ENCODE measurements at regions of chrX and their contacts with region 1.

Region 1: DNA sequence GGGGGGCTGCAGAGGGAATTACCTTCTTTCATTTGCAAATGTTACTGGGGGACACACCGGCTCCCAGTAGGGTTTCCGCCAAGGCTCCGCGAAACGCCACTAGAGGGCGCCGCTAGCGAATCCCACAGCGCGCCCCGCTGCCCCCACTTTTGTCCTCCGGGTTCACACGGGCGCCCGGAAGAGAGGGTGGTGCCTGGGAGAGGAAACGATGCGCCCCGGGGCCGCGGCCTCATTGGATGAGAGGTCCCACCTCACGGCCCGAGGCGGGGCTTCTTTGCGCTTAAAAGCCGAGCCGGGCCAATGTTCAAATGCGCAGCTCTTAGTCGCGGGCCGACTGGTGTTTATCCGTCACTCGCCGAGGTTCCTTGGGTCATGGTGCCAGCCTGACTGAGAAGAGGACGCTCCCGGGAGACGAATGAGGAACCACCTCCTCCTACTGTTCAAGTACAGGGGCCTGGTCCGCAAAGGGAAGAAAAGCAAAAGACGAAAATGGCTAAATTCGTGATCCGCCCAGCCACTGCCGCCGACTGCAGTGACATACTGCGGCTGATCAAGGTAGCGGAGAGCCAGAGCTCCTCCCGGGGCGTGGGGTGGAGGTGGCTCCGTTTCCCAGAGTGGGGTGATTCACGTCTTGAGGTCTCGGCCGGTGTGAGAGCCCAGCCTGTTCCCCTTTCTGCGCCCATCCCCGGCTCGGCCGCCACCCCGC is at the start of gene SAT1:
- DNase-seq: peak; percentile 84 to 94 (median 91)
- ATAC-seq: peak; percentile 89
- H3K4me3 ChIP-seq: peak within 1 kb of the TSS; percentile 91
- H3K4me3 Mint-ChIP-seq: peak within 1 kb of the TSS; percentile 84 to 98 (median 95)
- H3K27ac ChIP-seq: peak within 1 kb of the TSS; percentile 88
- H3K27ac Mint-ChIP-seq: peak within 1 kb of the TSS; percentile 96 to 99 (median 97)
- H3K4me1 ChIP-seq: peaks cover 13 to 17% of the 10 kb centered on the region in 2 donors
- H3K4me1 Mint-ChIP-seq: peaks cover 14 to 41% (median 35%) of the 10 kb centered on the region in 7 donors
- H3K27me3 ChIP-seq: no peaks in the 10 kb centered on the region
- H3K27me3 Mint-ChIP-seq: no peaks in the 10 kb centered on the region
- total RNA-seq, gene SAT1: 68.4 to 1,059 (median 127) TPM

Region 2: DNA sequence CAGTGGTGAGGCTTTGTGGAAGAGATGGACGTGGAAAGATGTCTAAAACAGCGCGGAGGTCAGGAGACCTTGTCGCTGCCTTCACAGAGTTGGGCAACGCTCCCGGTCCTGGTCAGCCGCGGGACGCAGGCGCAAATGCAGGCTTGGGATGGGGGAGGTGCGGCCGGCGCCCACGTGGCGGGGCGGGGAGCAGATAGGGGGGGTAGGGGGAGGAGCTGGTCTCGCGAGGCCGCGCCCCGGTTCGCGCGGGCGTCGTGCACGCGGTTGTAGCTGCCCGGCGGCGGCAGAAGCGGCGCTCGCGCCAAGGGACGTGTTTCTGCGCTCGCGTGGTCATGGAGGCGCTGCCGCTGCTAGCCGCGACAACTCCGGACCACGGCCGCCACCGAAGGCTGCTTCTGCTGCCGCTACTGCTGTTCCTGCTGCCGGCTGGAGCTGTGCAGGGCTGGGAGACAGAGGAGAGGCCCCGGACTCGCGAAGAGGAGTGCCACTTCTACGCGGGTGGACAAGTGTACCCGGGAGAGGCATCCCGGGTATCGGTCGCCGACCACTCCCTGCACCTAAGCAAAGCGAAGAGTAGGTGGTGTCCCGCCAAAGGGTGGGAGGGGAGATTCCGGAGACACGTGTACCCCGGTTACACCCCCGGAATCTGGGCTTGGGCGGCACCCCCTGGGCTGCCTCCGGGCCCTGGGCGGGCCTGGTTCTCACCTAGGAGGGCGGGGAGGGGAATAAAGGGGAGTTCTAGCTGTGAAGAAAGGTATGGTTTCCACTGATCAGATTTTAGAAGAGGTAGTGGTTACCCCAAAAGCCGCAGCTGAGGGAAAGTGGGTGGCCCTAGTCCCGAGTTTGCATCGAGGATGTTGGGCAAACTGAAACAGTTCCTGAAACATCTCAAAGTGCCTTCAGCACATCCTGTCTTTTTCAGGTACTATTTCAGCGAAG is 115.5 kb before region 1 on chrX and contains the start of gene PRDX4:
- CTCF ChIA-PET with region 1: no interaction called
- POLR2A ChIA-PET with region 1: interaction called, 4 read pairs
- intact Hi-C with region 1: loop called (anchors 1 to 2 kb)
- DNase-seq: peak; percentile 42 to 79 (median 57)
- ATAC-seq: peak; percentile 96
- H3K4me3 ChIP-seq: peak within 1 kb of the TSS; percentile 73
- H3K4me3 Mint-ChIP-seq: peak within 1 kb of the TSS; percentile 80 to 94 (median 92)
- H3K27ac ChIP-seq: peak within 1 kb of the TSS; percentile 85
- H3K27ac Mint-ChIP-seq: peak within 1 kb of the TSS; percentile 71 to 97 (median 89)
- H3K4me1 ChIP-seq: peaks cover 10 to 12% of the 10 kb centered on the region in 2 donors
- H3K4me1 Mint-ChIP-seq: peaks cover 6 to 29% (median 23%) of the 10 kb centered on the region in 7 donors
- H3K27me3 ChIP-seq: no peaks in the 10 kb centered on the region
- H3K27me3 Mint-ChIP-seq: no peaks in the 10 kb centered on the region
- total RNA-seq, gene PRDX4: 8.0 to 33.3 (median 12.1) TPM

Region 3: DNA sequence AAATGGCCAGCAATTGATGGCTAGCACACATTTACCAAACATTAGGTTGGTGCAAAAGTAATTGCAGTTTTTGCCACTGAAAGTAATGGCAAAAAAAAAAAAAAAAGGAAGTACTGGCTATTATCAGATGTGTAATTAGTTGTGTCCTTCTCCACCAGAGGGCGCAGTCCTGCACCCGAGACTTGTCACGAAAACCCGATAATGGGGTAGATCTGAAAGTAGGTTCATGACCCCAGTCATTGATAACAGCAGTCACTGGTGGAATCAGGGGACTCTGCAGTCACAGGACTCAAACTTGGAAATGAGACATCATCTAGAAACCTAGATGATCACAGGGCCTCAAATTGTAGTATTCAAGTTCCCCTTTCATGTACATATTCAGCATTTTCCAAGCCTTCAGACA is 26.9 kb before region 1 on chrX:
- CTCF ChIA-PET with region 1: interaction called, 3 read pairs
- POLR2A ChIA-PET with region 1: interaction called, 3 read pairs
- intact Hi-C with region 1: loop called (anchors 1 kb)
- DNase-seq: peak in 8 of 9 donors; percentile 23 to 63 (median 47)
- ATAC-seq: peak; percentile 84
- H3K4me3 ChIP-seq: no peak overlapping the region
- H3K4me3 Mint-ChIP-seq: peak overlapping the region in 2 of 10 donors; percentile 33 to 54
- H3K27ac ChIP-seq: no peak overlapping the region
- H3K27ac Mint-ChIP-seq: no peak overlapping the region
- H3K4me1 ChIP-seq: no peaks in the 10 kb centered on the region
- H3K4me1 Mint-ChIP-seq: peaks cover 0 to 6% (median 0%) of the 10 kb centered on the region in 7 donors
- H3K27me3 ChIP-seq: no peaks in the 10 kb centered on the region
- H3K27me3 Mint-ChIP-seq: no peaks in the 10 kb centered on the region

Region 4: GRCh38 chrX:23817172-23817601 is 34.2 kb after region 1 on chrX:
- CTCF ChIA-PET with region 1: no interaction called
- POLR2A ChIA-PET with region 1: no interaction called
- intact Hi-C with region 1: no loop called
- DNase-seq: no peak
- ATAC-seq: peak; percentile 55
- H3K4me3 ChIP-seq: no peak overlapping the region
- H3K4me3 Mint-ChIP-seq: no peak overlapping the region
- H3K27ac ChIP-seq: no peak overlapping the region
- H3K27ac Mint-ChIP-seq: no peak overlapping the region
- H3K4me1 ChIP-seq: no peaks in the 10 kb centered on the region
- H3K4me1 Mint-ChIP-seq: peaks cover 0 to 4% (median 0%) of the 10 kb centered on the region in 7 donors
- H3K27me3 ChIP-seq: no peaks in the 10 kb centered on the region
- H3K27me3 Mint-ChIP-seq: no peaks in the 10 kb centered on the region

Region 5: DNA sequence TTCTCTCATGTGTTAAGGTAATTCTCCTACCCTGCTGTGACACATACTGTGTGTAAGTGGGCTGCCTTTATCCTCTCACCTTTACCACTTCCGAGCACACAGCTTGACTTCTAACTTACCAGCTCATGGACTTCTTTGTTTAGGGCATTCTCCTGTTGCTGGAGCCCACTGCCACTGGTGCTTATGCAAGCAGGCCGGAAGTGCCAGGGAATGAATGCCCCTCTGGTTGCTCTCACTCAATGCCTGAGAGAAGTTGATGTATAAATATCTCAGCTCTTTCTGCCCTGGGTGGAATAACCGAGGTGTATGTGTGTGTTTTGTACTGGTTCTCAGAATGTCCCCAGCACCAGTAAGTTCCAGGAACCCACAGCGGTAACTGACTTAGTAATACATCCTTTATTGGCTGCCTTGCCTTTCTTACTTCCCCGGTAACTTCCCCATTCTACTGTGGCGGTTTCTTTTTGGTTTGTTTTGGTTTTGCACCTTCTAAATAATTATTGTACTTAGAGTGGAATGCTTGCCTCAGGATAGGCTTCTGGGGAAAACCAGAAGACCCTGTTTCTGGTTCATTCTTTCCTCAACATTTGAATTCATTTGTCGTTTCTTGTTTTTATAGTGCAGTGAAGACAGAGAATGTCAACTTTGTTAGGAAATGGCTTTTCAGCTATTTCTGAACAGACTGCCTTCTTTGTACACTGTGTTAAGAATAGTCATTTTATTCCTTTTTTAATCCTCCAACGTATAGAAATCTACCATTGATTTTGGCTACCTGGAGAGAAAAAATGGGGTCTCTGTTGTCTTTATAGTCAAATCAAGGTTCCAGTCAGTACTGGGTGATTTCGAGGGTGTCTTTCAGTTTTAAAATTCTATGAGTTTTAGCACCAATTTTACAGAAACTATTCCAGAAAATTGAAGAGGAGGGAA is 170.2 kb after region 1 on chrX:
- CTCF ChIA-PET with region 1: interaction called, 6 read pairs
- POLR2A ChIA-PET with region 1: interaction called, 3 read pairs
- intact Hi-C with region 1: loop called (anchors 2 kb)
- DNase-seq: peak in 8 of 9 donors; percentile 31 to 63 (median 46)
- ATAC-seq: peak; percentile 93
- H3K4me3 ChIP-seq: peak overlapping the region; percentile 84
- H3K4me3 Mint-ChIP-seq: peak overlapping the region; percentile 72 to 97 (median 88)
- H3K27ac ChIP-seq: peak overlapping the region; percentile 80
- H3K27ac Mint-ChIP-seq: peak overlapping the region; percentile 78 to 99 (median 91)
- H3K4me1 ChIP-seq: peaks cover 0 to 12% of the 10 kb centered on the region in 2 donors
- H3K4me1 Mint-ChIP-seq: peaks cover 7 to 55% (median 20%) of the 10 kb centered on the region in 7 donors
- H3K27me3 ChIP-seq: no peaks in the 10 kb centered on the region
- H3K27me3 Mint-ChIP-seq: no peaks in the 10 kb centered on the region

Region 6: DNA sequence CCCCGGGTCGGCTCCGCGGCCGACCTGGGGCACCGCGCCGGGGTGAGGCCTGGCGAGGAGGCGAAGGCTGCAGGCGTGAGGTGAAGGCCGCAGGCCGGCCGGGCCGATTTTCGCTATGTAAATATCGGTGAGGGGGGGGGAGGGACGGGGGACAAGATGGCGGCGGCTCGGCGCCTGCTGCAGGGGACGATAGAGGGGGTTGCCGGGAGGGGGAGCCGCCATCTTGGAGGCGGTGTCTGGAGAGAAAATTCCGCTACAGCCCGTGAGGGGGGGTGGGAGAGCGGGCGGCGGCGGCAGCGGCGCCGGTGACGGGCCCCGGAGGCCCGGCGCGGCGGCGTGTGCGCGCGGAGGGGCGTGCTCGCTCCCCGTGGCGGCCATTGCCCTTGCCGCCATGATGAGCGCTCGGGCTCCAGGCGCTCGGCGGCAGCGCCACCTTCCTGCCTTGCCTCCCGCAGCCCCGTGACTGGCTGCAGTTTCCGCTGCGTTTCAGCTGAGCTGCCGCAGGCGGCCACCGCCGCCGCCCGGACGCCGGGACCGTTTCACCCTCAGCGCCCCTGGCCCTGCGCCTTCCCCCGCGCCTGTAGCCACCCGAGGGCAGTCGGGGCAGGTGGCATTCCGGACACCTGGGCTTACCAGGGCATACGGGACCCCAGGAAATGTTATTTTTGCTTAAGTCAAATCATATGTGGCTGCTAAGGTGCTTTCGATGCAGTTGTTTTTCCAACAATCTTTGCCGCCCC is 367.2 kb after region 1 on chrX:
- CTCF ChIA-PET with region 1: no interaction called
- POLR2A ChIA-PET with region 1: interaction called, 6 read pairs
- intact Hi-C with region 1: loop called in 1 of 2 experiments (anchors 5 kb)
- DNase-seq: peak in 8 of 9 donors; percentile 67 to 95 (median 90)
- ATAC-seq: peak; percentile 89
- H3K4me3 ChIP-seq: peak overlapping the region; percentile 84
- H3K4me3 Mint-ChIP-seq: peak overlapping the region; percentile 85 to 97 (median 91)
- H3K27ac ChIP-seq: peak overlapping the region; percentile 98
- H3K27ac Mint-ChIP-seq: peak overlapping the region; percentile 83 to 94 (median 91)
- H3K4me1 ChIP-seq: peaks cover 28% of the 10 kb centered on the region in 2 donors
- H3K4me1 Mint-ChIP-seq: peaks cover 16 to 83% (median 66%) of the 10 kb centered on the region in 7 donors
- H3K27me3 ChIP-seq: no peaks in the 10 kb centered on the region
- H3K27me3 Mint-ChIP-seq: no peaks in the 10 kb centered on the region

Region 7: GRCh38 chrX:24241822-24242648 is 459.0 kb after region 1 on chrX:
- CTCF ChIA-PET with region 1: no interaction called
- POLR2A ChIA-PET with region 1: no interaction called
- intact Hi-C with region 1: no loop called
- DNase-seq: peak in 5 of 9 donors; percentile 4 to 41 (median 28)
- ATAC-seq: peak; percentile 38
- H3K4me3 ChIP-seq: no peak overlapping the region
- H3K4me3 Mint-ChIP-seq: no peak overlapping the region
- H3K27ac ChIP-seq: no peak overlapping the region
- H3K27ac Mint-ChIP-seq: peak overlapping the region in 1 of 9 donors; percentile 8
- H3K4me1 ChIP-seq: no peaks in the 10 kb centered on the region
- H3K4me1 Mint-ChIP-seq: peaks cover 0 to 4% (median 0%) of the 10 kb centered on the region in 7 donors
- H3K27me3 ChIP-seq: no peaks in the 10 kb centered on the region
- H3K27me3 Mint-ChIP-seq: peaks cover 0 to 2% (median 0%) of the 10 kb centered on the region in 5 donors

Region 8: DNA sequence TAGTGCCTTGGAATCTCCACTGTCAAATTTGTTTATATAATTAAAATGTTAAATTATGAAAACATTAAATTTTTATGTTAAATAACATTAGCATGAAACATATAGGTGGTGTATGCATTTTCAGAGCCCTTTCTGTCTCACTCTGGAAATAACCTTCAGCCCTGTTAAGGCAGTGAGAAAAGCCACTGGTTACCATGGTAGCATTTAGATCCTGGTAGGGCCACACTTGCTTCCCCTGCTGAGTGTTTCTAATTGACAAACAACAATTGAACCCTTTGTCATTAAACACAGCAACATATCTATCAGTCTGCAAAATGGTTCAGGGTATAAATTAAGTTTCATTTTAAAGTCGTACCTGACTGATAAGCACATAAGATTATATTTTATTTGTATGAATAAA is 745.6 kb after region 1 on chrX:
- CTCF ChIA-PET with region 1: no interaction called
- POLR2A ChIA-PET with region 1: no interaction called
- intact Hi-C with region 1: no loop called
- DNase-seq: no peak
- ATAC-seq: no peak
- H3K4me3 ChIP-seq: no peak overlapping the region
- H3K4me3 Mint-ChIP-seq: no peak overlapping the region
- H3K27ac ChIP-seq: no peak overlapping the region
- H3K27ac Mint-ChIP-seq: no peak overlapping the region
- H3K4me1 ChIP-seq: no peaks in the 10 kb centered on the region
- H3K4me1 Mint-ChIP-seq: no peaks in the 10 kb centered on the region
- H3K27me3 ChIP-seq: no peaks in the 10 kb centered on the region
- H3K27me3 Mint-ChIP-seq: no peaks in the 10 kb centered on the region

Region 9: DNA sequence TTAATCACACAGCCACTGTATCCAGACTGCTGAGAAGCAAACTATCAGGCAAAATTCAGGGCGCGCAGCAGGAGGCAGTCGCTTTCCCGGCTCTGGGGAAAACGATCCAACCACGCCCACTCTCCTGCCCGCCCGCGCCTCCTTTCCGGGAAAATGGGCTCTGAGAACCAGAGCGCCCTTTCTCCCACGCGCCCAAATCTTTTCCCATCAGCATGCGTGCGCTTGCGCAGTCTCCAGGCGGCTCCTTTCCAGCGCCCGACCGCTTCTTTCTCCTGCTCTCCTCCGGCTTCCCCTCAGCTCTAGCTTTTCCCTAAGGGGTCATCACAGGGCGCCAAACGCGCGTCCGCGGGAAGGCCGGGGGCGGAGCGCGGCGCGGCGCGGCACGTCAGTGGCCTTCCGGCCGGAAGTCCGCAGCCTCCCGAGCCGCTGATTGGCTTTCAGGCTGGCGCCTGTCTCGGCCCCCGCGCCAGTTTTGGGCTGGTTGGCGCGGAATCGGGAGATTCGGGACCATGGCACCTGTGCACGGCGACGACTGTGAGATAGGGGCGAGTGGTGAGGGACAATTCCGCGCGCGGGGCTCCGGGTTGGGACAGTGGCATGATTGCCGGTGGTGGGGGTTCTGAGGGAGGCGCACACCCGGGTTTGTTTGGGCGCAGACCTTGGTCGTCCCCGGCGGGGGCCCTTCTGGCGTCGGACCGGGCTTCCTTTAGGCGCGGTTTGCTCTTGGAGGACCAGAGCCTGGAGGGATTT is 910.6 kb after region 1 on chrX and contains the start of gene POLA1:
- CTCF ChIA-PET with region 1: no interaction called
- POLR2A ChIA-PET with region 1: no interaction called
- intact Hi-C with region 1: loop called in 1 of 2 experiments (anchors 5 kb)
- DNase-seq: peak; percentile 33 to 81 (median 41)
- ATAC-seq: peak; percentile 97
- H3K4me3 ChIP-seq: peak within 1 kb of the TSS; percentile 78
- H3K4me3 Mint-ChIP-seq: peak within 1 kb of the TSS; percentile 85 to 94 (median 89)
- H3K27ac ChIP-seq: peak within 1 kb of the TSS; percentile 52
- H3K27ac Mint-ChIP-seq: peak within 1 kb of the TSS; percentile 28 to 95 (median 77)
- H3K4me1 ChIP-seq: no peaks in the 10 kb centered on the region
- H3K4me1 Mint-ChIP-seq: peaks cover 0 to 24% (median 13%) of the 10 kb centered on the region in 7 donors
- H3K27me3 ChIP-seq: no peaks in the 10 kb centered on the region
- H3K27me3 Mint-ChIP-seq: no peaks in the 10 kb centered on the region
- total RNA-seq, gene POLA1: 6.4 to 26.6 (median 7.5) TPM

Measured in naive thymus-derived CD4-positive, alpha-beta T cell (primary cell).